Activated T-helper 2 cell treated with anti-CD3 and anti-CD28 coated beads, Interferon-gamma antibody, Interleukin-2, Interleukin-4, amounts not matched to agents 10 μg/mL and 5 μg/mL and 100 μg/mL, durations not matched to agents 14 hours and 24 hours and 36 hours (primary cell): ENCODE measurements at regions of chr18 and their contacts with region 1.

Region 1: DNA sequence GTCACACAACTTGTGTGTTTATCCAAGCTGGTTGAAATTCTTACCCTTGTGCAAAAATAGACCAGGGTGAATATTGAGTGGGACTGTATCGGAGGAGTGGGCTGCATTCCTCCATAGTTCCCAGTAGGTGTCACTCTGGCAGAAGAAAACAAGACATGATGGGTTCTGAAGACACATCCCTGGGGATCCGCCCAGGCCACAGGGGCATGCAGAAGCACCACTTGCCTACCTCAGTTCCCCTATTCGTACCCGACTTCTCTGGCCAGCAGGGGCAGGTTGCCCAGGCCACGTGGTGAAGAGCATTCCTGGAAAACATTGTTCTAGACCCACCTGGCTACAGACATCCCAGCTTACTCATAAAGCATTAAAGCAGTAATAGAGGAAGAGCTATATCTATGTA is 168.2 kb downstream of the FAM210A start:
- DNase-seq: no peak
- H3K4me3 Mint-ChIP-seq: no peak overlapping the region
- H3K27ac Mint-ChIP-seq: no peak overlapping the region
- H3K4me1 Mint-ChIP-seq: peaks cover 28% of the 10 kb centered on the region
- H3K27me3 Mint-ChIP-seq: no peaks in the 10 kb centered on the region

Region 2: DNA sequence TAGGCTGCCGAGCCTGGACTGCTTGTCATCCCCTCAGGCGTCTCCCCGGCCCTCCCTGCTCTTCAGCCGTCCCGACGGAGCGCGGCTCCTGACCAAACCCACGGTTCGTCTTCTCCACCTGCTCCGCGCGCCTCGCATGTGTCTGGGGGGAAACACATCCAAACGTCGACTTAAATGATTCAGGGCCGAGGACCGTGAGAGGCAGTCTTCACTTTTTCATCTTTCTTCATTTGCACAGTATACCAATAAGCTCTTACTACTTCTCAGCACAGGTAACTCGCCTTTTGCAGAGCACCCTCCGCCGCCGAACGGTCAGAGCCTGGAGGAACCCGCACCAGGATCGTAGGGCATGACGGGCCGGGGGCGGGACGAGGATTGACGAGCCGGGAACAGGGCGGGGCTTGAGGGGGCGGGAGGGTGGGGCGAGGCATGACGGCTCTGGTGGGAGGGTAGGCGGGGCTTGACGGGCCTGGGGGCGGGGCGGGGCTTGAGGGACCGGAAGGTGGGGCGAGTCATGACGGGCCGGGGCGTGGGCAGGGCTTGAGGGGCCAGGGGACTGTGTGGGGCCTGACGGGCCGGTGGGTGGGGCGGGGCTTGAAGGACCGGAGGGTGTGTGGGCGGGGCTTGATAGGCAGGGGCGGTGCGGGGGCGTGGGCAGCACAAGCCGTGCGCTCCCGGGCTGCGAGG is 610.6 kb before region 1 on chr18 and contains the start of gene SEH1L:
- intact Hi-C with region 1: loop called (anchors 5 kb)
- DNase-seq: peak; percentile 96
- H3K4me3 Mint-ChIP-seq: peak within 1 kb of the TSS; percentile 98
- H3K27ac Mint-ChIP-seq: peak within 1 kb of the TSS; percentile 99
- H3K4me1 Mint-ChIP-seq: peaks cover 29% of the 10 kb centered on the region
- H3K27me3 Mint-ChIP-seq: no peaks in the 10 kb centered on the region
- total RNA-seq, gene SEH1L: 112 and 115 TPM in 2 replicates

Region 3: GRCh38 chr18:13513021-13513420 is 45.1 kb before region 1 on chr18:
- intact Hi-C with region 1: no loop called
- DNase-seq: no peak
- H3K4me3 Mint-ChIP-seq: no peak overlapping the region
- H3K27ac Mint-ChIP-seq: no peak overlapping the region
- H3K4me1 Mint-ChIP-seq: peaks cover 16% of the 10 kb centered on the region
- H3K27me3 Mint-ChIP-seq: no peaks in the 10 kb centered on the region

Region 4: DNA sequence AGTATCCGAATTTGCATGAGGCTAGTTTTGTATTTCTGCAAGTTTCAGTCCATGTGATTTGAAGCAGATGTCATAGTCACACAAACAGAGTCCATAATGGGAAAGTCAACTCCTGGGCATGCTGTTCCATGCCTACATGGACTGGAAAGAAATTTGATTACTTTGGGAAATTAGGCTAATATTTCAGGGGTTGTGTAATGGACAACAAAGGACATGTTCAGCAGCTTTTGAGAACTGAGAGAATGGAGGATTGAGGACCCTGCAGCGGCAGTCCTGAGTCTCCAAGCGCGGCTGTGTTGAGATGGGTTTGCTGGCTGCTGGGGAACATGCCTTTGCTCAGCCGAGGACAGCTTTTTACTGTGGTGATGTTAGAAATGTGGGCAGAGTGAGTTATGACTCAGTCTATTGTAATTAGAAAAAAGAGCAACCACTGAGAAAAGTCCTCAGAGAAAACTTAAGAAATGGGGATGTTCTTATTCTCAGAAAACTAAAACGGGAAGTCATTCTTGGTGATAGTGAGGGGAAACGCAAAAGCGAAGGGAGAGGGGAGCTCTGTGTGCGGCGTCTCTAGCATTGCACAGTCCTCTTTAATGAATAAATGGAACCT is 19.1 kb after region 1 on chr18:
- intact Hi-C with region 1: loop called (anchors 1 kb)
- DNase-seq: peak; percentile 48
- H3K4me3 Mint-ChIP-seq: peak overlapping the region; percentile 61
- H3K27ac Mint-ChIP-seq: peak overlapping the region; percentile 82
- H3K4me1 Mint-ChIP-seq: peaks cover 45% of the 10 kb centered on the region
- H3K27me3 Mint-ChIP-seq: no peaks in the 10 kb centered on the region

Region 5: DNA sequence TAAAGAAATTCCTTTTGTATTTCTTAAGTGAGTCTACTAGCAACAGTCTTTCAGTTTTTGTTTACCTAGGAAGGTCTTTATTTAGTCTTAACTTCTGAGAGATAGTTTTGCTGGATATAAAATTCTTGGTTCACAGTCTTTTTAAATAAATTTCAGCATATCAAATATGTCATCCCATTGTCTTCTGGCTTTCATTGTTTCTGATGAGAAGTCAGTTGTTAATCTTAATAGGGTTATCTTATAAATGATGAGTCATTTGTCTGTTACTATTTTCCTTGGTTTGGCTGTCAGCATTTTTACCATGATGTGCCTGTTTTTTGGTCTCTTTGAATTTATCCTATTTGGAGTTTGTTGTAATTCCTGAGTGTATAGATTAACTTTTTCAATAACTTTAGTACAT is 38.9 kb after region 1 on chr18:
- intact Hi-C with region 1: no loop called
- DNase-seq: no peak
- H3K4me3 Mint-ChIP-seq: no peak overlapping the region
- H3K27ac Mint-ChIP-seq: no peak overlapping the region
- H3K4me1 Mint-ChIP-seq: peaks cover 10% of the 10 kb centered on the region
- H3K27me3 Mint-ChIP-seq: no peaks in the 10 kb centered on the region

Region 6: GRCh38 chr18:13611601-13612195 is 53.6 kb after region 1 on chr18:
- intact Hi-C with region 1: loop called (anchors 1 kb)
- DNase-seq: no peak
- H3K4me3 Mint-ChIP-seq: peak overlapping the region; percentile 78
- H3K27ac Mint-ChIP-seq: peak overlapping the region; percentile 90
- H3K4me1 Mint-ChIP-seq: peaks cover 82% of the 10 kb centered on the region
- H3K27me3 Mint-ChIP-seq: no peaks in the 10 kb centered on the region

Region 7: DNA sequence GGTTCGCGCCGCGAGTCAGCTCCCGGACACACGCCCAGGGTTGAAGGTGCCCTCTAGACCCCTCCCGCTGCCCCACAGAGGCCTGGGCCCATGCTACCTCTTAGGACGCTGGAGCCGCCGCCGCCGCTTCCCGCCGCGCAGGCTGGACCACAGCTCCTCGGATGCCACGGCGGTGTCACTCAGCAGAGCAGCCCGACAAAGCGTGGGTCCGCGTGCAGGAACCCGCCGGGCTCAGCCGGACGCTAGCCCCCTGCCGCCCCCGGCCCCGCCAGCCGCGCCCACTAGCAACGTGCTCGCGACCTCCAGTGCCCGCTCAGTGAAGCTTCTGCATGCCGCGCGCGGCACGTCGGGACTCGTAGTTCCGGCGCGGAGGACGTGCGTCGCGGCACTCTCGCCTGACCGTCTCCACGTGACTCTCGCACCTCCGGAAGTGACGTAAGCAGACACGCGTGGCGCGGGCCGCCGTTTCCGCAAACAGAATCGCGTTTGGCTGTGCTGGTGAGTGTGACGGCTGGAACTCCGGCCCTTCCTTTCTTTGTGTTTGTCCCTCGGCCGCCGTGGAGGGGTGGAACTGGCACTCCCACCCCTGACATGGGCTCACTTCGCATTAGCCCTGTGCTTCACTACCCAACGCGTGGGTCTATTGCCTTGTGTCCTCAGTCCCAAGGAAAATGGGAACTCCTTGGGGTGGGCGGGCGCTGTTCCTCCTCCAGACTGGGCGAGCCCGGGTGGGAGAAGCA is 168.3 kb after region 1 on chr18 and contains the starts of genes FAM210A and RNMT:
- intact Hi-C with region 1: loop called (anchors 2 kb)
- DNase-seq: peak; percentile 91
- H3K4me3 Mint-ChIP-seq: peak within 1 kb of the TSS; percentile 88
- H3K27ac Mint-ChIP-seq: peak within 1 kb of the TSS; percentile 79
- H3K4me1 Mint-ChIP-seq: peaks cover 49% of the 10 kb centered on the region
- H3K27me3 Mint-ChIP-seq: no peaks in the 10 kb centered on the region
- total RNA-seq, gene FAM210A: 30.3 and 33.8 TPM in 2 replicates
- total RNA-seq, gene RNMT: 54.0 and 54.3 TPM in 2 replicates